Activated CD4-positive, alpha-beta T cell treated with anti-CD3 and anti-CD28 coated beads for 36 hours (primary cell): ENCODE measurements at regions of chr22 and their contacts with region 1.

Region 1: GRCh38 chr22:37807410-37808293 is at the start of gene GCAT:
- DNase-seq: peak; percentile 97
- ATAC-seq: peak; percentile 97
- H3K4me3 Mint-ChIP-seq: peak within 1 kb of the TSS; percentile 78
- H3K27ac Mint-ChIP-seq: peak within 1 kb of the TSS; percentile 31
- H3K4me1 Mint-ChIP-seq: peaks cover 41% of the 10 kb centered on the region
- H3K27me3 Mint-ChIP-seq: peaks cover 37% of the 10 kb centered on the region
- total RNA-seq, gene GCAT: 21.3 to 22.4 TPM

Region 2: DNA sequence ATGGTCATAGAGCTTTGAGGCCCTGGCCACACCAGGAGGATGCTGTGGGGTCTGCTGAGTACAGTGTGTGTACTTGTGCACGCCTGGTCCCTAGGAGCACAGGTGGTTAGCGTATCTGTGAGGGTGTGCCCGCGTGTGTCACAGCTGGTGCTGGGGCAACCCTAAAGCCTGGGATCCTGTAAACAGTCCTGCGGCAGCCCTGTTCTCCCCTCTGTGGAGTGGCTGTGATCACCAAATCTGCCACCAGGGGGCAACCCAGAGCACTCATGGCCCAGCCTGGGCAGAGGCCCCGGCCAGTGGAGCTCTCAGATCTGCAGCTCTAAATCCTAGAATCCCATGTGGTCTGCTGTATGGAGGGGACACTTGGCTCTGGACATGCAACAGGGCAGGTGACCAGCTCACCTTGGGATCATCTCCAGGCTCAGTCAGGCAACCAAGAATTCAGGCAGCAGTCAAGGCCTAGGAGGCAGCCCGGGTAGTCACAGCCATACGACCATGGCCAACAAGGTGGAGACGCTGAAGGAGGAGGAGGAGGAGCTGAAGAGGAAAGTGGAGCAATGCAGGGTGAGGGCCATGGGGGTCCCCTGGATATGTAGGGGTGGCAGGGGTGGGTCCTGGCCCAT is 164.3 kb before region 1 on chr22:
- CTCF ChIA-PET with region 1: interaction called, 3 read pairs
- POLR2A ChIA-PET with region 1: no interaction called
- intact Hi-C with region 1: loop called in 1 of 2 experiments (anchors 5 kb)
- DNase-seq: peak; percentile 93
- ATAC-seq: peak; percentile 79
- H3K4me3 Mint-ChIP-seq: no peak overlapping the region
- H3K27ac Mint-ChIP-seq: peak overlapping the region; percentile 75
- H3K4me1 Mint-ChIP-seq: peaks cover 37% of the 10 kb centered on the region
- H3K27me3 Mint-ChIP-seq: no peaks in the 10 kb centered on the region

Region 3: GRCh38 chr22:37696657-37697537 is 110.8 kb before region 1 on chr22 and contains the start of gene TRIOBP:
- CTCF ChIA-PET with region 1: no interaction called
- POLR2A ChIA-PET with region 1: no interaction called
- intact Hi-C with region 1: loop called in 1 of 2 experiments (anchors 2 kb)
- DNase-seq: peak; percentile 98
- ATAC-seq: peak; percentile 99
- H3K4me3 Mint-ChIP-seq: peak within 1 kb of the TSS; percentile 71
- H3K27ac Mint-ChIP-seq: peak within 1 kb of the TSS; percentile 67
- H3K4me1 Mint-ChIP-seq: peaks cover 17% of the 10 kb centered on the region
- H3K27me3 Mint-ChIP-seq: no peaks in the 10 kb centered on the region
- total RNA-seq, gene TRIOBP: 23.3 to 26.1 TPM

Region 4: DNA sequence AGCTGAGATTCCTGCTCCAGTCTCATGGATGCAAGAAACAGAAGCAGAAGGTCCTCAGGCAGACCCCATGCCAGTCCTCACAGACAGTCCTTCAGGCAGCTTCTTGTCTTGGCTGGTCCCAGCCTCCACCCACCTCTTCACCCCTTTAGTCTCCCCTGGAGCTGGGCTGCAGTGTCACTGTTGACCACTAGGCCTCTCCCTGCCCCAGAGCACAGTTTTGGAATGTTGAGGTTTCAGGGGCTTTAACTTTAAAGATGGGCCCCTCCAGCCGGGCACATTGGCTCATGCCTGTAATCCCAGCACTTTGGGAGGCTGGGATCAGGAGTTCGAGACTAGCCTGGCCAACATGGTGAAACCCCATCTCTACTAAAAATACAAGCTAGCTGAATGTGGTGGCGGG is 39.4 kb before region 1 on chr22:
- CTCF ChIA-PET with region 1: no interaction called
- POLR2A ChIA-PET with region 1: no interaction called
- intact Hi-C with region 1: no loop called
- DNase-seq: peak; percentile 16
- ATAC-seq: no peak
- H3K4me3 Mint-ChIP-seq: no peak overlapping the region
- H3K27ac Mint-ChIP-seq: no peak overlapping the region
- H3K4me1 Mint-ChIP-seq: no peaks in the 10 kb centered on the region
- H3K27me3 Mint-ChIP-seq: no peaks in the 10 kb centered on the region

Region 5: DNA sequence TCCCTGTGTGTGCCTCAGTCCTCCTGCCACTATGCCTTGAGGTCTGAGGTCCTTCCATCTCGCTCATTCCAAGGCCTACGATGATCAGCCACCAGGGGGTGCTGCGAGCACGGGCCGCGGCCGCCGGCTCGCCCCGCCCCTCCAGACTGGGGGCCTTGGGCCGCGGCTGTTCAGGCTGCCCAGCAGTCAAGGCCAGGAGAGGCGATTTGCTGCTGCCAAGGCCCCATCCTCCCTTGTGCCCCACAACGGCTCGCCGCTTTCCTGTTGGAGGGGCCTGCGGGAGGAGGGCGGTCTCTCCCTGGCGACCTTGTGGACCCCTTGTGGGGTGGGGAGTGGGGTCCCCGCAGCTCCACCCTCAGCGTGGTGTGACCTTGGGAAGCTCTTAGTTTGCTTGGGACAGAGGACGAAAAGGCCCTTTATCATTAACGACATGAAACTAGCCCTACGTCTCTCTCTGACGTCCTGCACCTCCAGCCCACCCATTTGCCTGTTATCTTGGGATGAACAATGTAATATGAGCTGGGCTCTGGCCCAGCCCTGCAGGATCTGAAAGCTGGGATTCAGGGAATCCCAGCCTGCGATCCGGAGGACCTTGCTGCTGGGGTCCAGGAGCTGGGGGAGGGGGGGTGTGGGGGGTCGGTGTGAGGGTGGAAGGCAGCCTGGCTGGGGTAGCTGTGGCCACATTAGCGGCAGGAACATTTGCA is 10.2 kb after region 1 on chr22:
- CTCF ChIA-PET with region 1: interaction called, 23 read pairs
- POLR2A ChIA-PET with region 1: interaction called, 3 read pairs
- intact Hi-C with region 1: no loop called
- DNase-seq: peak; percentile 89
- ATAC-seq: peak; percentile 86
- H3K4me3 Mint-ChIP-seq: no peak overlapping the region
- H3K27ac Mint-ChIP-seq: no peak overlapping the region
- H3K4me1 Mint-ChIP-seq: peaks cover 8% of the 10 kb centered on the region
- H3K27me3 Mint-ChIP-seq: peaks cover 16% of the 10 kb centered on the region

Region 6: DNA sequence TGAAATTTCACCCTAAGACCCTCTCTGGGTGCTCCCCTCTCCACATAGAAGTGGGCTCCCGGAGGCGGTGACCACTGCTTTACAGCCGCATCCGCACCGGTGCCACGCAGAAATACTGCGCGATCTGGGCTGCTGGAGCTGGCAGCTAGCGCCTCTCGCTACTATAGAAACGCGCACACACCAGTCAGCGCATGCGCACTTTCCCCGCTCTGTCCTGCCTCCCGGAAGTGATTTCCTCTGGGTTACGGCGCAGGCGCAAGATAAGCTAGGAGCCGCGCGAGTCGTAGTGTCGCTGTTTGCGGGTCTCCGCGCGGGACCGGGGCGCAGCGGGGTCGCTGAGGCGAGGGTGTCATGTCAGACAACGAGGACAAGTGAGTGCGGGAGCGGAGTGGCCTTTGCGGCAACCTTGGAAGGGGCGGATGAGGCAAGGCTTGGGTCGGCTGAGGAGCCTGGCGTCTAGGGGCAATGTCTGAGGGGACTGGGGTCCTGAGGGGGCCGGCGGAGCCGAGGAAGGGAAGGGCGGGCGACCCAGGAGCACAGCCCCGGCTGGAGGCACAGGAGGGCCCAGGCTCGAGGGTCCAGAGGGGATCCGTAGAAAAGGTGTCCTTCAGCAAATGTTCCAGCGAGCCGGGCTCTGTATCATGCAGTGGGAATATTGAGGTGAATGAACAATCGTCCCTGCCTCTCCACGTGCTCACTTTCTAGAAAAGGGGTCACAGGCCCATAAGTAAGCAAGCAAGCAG is 146.0 kb after region 1 on chr22 and contains the starts of genes C22orf23 and POLR2F:
- CTCF ChIA-PET with region 1: no interaction called
- POLR2A ChIA-PET with region 1: no interaction called
- intact Hi-C with region 1: loop called in 1 of 2 experiments (anchors 1 kb)
- DNase-seq: peak; percentile 98
- ATAC-seq: peak; percentile 98
- H3K4me3 Mint-ChIP-seq: peak within 1 kb of the TSS; percentile 86
- H3K27ac Mint-ChIP-seq: peak within 1 kb of the TSS; percentile 91
- H3K4me1 Mint-ChIP-seq: peaks cover 26% of the 10 kb centered on the region
- H3K27me3 Mint-ChIP-seq: peaks cover 11% of the 10 kb centered on the region
- total RNA-seq, gene C22orf23: 0.16 TPM in 1 of 2 experiments, not detected in the other
- total RNA-seq, gene POLR2F: 70.5 to 77.8 TPM

Region 7: DNA sequence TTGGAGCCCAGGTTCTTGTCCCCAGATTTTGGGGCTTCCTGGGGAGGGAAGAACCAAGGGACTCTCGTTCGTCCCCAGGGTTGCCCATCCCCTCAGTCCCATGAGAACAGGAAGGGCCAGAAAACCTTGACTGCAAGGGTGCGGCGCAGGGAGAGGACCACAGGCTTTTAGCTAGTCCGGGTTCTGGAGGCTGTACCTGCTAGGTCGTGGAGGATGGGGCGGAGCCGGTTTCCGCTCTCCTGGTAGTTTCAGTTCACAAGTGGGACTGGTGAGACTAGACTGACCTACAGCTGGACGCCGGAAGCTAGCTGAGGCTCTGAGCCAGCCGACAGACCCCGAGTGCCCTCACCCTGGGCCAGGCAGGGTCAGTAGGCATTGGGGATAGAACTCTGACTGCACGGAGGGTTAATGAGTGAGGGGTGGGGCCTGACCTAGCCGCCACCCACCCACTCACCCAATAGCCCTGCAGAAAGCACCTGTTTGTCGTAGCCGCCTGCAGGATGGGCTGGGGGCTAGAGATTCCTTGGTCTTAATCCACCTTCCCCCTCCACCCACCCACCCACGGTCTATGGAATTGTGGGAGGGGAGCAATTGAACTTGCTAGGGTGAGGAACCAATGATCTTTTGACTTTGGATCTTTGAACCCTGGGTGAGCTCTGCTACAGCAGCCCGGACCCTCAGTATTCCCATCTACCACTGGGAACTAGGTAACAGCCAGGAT is 395.6 kb after region 1 on chr22:
- CTCF ChIA-PET with region 1: no interaction called
- POLR2A ChIA-PET with region 1: no interaction called
- intact Hi-C with region 1: no loop called
- DNase-seq: peak; percentile 62
- ATAC-seq: peak; percentile 18
- H3K4me3 Mint-ChIP-seq: peak overlapping the region; percentile 81
- H3K27ac Mint-ChIP-seq: peak overlapping the region; percentile 70
- H3K4me1 Mint-ChIP-seq: peaks cover 31% of the 10 kb centered on the region
- H3K27me3 Mint-ChIP-seq: no peaks in the 10 kb centered on the region